CD8-positive, alpha-beta T cell (primary cell): ENCODE measurements at regions of chrX and their contacts with region 1.

Region 1: DNA sequence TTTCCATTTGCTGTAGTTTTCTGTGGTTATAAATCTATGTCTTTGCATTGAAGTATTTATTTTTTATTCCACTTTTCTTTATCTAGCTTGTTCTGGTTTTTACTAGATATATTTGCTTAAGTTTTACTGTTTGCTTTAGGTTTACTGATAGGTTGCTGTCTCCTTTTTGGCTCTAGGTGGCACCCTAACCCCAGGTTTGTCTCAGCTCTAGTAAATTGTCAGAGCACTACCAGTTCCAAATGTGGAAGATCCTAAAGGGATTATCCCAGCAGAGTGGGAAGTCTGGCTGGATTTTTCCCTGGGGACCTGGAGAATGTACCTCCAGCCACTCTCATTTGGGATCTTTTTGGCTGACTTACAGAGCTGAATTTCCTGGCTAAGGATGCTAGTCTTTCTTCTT is 106.1 kb downstream of the PBDC1 start:
- DNase-seq: peak in 8 of 9 experiments; percentile 2 to 62 (median 42)
- ATAC-seq: no peak
- H3K4me3 ChIP-seq: no peak overlapping the region
- H3K4me3 Mint-ChIP-seq: no peak overlapping the region
- H3K27ac ChIP-seq: no peak overlapping the region
- H3K27ac Mint-ChIP-seq: no peak overlapping the region
- H3K4me1 ChIP-seq: no peaks in the 10 kb centered on the region
- H3K4me1 Mint-ChIP-seq: no peaks in the 10 kb centered on the region
- H3K27me3 ChIP-seq: no peaks in the 10 kb centered on the region
- H3K27me3 Mint-ChIP-seq: no peaks in the 10 kb centered on the region
- CTCF ChIP-seq: peak; percentile 57

Region 2: GRCh38 chrX:76184276-76184675 is 94.7 kb before region 1 on chrX:
- CTCF ChIA-PET with region 1: no interaction called
- POLR2A ChIA-PET with region 1: no interaction called
- intact Hi-C with region 1: no loop called
- DNase-seq: no peak
- ATAC-seq: no peak
- H3K4me3 ChIP-seq: no peak overlapping the region
- H3K4me3 Mint-ChIP-seq: no peak overlapping the region
- H3K27ac ChIP-seq: no peak overlapping the region
- H3K27ac Mint-ChIP-seq: peak overlapping the region; percentile 18
- H3K4me1 ChIP-seq: no peaks in the 10 kb centered on the region
- H3K4me1 Mint-ChIP-seq: peaks cover 36% of the 10 kb centered on the region
- H3K27me3 ChIP-seq: no peaks in the 10 kb centered on the region
- H3K27me3 Mint-ChIP-seq: no peaks in the 10 kb centered on the region
- CTCF ChIP-seq: no peak

Region 3: DNA sequence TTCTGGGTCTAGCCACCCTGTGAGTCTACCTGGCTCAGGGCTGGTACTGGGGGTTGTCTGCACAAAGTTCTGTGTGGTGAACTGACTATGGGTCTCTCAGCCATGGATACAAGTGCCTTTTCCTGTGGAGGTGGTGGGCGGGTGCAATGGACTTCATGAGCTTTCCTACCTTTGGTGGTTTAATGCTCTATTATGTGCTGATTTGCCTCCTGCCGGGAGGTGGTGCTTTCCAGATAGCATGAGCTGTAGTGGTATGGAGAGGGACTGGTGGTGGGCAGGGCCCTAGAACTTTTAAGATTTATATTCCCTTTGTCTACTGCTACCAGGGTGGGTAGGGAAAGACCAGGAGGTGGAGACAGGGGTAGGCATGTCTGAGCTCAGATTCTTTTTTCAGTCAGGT is 58.1 kb before region 1 on chrX:
- CTCF ChIA-PET with region 1: no interaction called
- POLR2A ChIA-PET with region 1: no interaction called
- intact Hi-C with region 1: no loop called
- DNase-seq: no peak
- ATAC-seq: no peak
- H3K4me3 ChIP-seq: no peak overlapping the region
- H3K4me3 Mint-ChIP-seq: no peak overlapping the region
- H3K27ac ChIP-seq: no peak overlapping the region
- H3K27ac Mint-ChIP-seq: no peak overlapping the region
- H3K4me1 ChIP-seq: no peaks in the 10 kb centered on the region
- H3K4me1 Mint-ChIP-seq: no peaks in the 10 kb centered on the region
- H3K27me3 ChIP-seq: no peaks in the 10 kb centered on the region
- H3K27me3 Mint-ChIP-seq: no peaks in the 10 kb centered on the region
- CTCF ChIP-seq: no peak

Region 4: GRCh38 chrX:76454456-76454927 is 175.5 kb after region 1 on chrX:
- CTCF ChIA-PET with region 1: interaction called, 35 read pairs
- POLR2A ChIA-PET with region 1: interaction called, 3 read pairs
- intact Hi-C with region 1: loop called in 1 of 2 experiments (anchors 1 kb)
- DNase-seq: peak in 3 of 9 experiments; percentile 0 to 50 (median 38)
- ATAC-seq: peak; percentile 58
- H3K4me3 ChIP-seq: no peak overlapping the region
- H3K4me3 Mint-ChIP-seq: no peak overlapping the region
- H3K27ac ChIP-seq: no peak overlapping the region
- H3K27ac Mint-ChIP-seq: no peak overlapping the region
- H3K4me1 ChIP-seq: no peaks in the 10 kb centered on the region
- H3K4me1 Mint-ChIP-seq: peaks cover 4% of the 10 kb centered on the region
- H3K27me3 ChIP-seq: no peaks in the 10 kb centered on the region
- H3K27me3 Mint-ChIP-seq: no peaks in the 10 kb centered on the region
- CTCF ChIP-seq: peak; percentile 55

Region 5: GRCh38 chrX:78024349-78025108 is 1745.5 kb after region 1 on chrX:
- CTCF ChIA-PET with region 1: no interaction called
- POLR2A ChIA-PET with region 1: no interaction called
- intact Hi-C with region 1: loop called in 1 of 2 experiments (anchors 2 kb)
- DNase-seq: peak in 6 of 9 experiments; percentile 11 to 67 (median 43)
- ATAC-seq: peak; percentile 88
- H3K4me3 ChIP-seq: no peak overlapping the region
- H3K4me3 Mint-ChIP-seq: no peak overlapping the region
- H3K27ac ChIP-seq: no peak overlapping the region
- H3K27ac Mint-ChIP-seq: no peak overlapping the region
- H3K4me1 ChIP-seq: no peaks in the 10 kb centered on the region
- H3K4me1 Mint-ChIP-seq: peaks cover 5% of the 10 kb centered on the region
- H3K27me3 ChIP-seq: no peaks in the 10 kb centered on the region
- H3K27me3 Mint-ChIP-seq: no peaks in the 10 kb centered on the region
- CTCF ChIP-seq: peak; percentile 47